B cell (primary cell): ENCODE measurements at regions of chr12 and their contacts with region 1.

Region 1: DNA sequence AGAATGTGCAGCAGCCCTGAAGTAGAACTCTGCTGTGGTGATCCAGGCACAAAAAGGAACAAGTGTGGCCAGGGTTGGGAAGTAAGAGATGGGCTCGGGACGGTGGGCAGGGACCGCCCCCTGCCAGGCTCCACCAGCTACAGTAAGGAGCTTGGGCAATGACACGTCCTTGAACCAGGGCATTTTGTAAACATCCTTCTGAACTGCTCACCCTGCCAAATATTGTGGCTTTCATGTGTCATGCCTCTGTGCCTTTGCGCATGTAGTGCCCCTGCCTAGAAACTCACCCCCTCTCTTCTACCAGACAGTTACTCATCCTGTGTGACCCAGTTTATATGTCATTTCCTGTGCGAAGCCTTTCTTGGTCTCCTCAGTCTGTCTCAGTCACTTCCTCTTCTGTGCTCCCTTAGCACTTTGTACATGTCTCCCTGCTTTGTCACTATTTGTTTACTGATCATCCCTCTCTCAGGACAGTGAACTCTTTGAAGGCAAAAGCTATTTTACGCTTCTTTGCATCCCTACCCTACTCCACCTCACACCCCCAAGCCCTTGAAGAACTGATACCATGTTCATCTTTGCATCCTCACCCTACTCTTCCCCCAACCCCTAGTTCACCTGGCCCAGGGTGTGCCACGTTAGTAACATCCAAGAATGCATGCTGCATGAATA is 108.9 kb upstream of the PLEKHG7 start:
- DNase-seq: peak; percentile 94
- ATAC-seq: peak; percentile 93
- H3K4me3 ChIP-seq: peak overlapping the region in 2 of 5 experiments; percentile 20 to 22
- H3K4me3 Mint-ChIP-seq: peak overlapping the region; percentile 69
- H3K27ac ChIP-seq: peak overlapping the region; percentile 86 to 97
- H3K27ac Mint-ChIP-seq: peak overlapping the region; percentile 94
- H3K4me1 ChIP-seq: peaks cover 21 to 25% of the 10 kb centered on the region in 2 donors
- H3K4me1 Mint-ChIP-seq: peaks cover 34% of the 10 kb centered on the region
- H3K27me3 ChIP-seq: no peaks in the 10 kb centered on the region
- H3K27me3 Mint-ChIP-seq: no peaks in the 10 kb centered on the region
- CTCF ChIP-seq: no peak

Region 2: DNA sequence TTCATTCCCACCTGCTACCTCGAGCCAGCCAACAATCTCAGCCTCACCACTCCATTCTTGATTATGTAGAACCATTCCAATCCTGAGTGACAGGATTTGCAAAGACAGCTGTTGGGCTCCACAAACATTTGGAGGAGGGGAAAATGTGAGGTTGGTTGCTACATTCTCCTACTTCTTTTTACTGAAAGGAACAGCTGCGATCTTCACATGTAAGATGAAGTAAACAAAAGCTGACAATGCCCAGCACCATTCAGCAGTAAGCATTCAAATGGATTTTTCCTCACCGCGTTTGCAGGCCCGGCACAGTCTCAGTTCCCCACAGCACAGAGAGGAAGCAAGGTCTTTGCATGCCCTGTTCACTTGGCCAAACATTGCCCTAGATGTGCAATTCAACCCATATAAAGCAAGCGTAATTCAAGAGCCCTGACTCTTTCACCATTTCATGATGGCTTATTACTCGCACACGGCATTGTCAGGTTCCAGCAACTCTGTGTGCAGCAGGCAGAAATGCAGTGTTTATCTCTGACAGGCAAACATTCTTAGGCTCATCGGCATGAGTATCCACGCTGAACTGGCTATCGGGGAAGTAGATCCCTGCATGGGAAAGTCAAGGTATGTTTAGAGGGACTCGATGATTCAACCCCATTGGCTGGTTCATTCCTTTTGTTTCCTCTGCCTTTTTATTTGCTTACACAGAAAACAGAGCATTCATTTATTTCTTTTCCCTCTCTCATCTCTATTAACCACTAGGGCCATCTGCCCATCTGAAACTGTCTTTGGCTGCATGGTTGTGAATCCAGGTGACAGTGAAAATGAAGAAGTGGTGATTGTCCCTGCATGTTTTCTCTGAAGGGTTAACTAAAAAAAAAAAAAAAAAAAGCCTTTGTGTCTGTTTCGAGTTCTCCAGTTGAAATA is 127.2 kb before region 1 on chr12:
- CTCF ChIA-PET with region 1: no interaction called
- POLR2A ChIA-PET with region 1: interaction called, 10 read pairs
- intact Hi-C with region 1: loop called (anchors 1 kb)
- DNase-seq: peak; percentile 87
- ATAC-seq: peak; percentile 76
- H3K4me3 ChIP-seq: peak overlapping the region; percentile 61 to 93 (median 68)
- H3K4me3 Mint-ChIP-seq: peak overlapping the region; percentile 94
- H3K27ac ChIP-seq: peak overlapping the region; percentile 85 to 93
- H3K27ac Mint-ChIP-seq: peak overlapping the region; percentile 95
- H3K4me1 ChIP-seq: peaks cover 80 to 83% of the 10 kb centered on the region in 2 donors
- H3K4me1 Mint-ChIP-seq: peaks cover 81% of the 10 kb centered on the region
- H3K27me3 ChIP-seq: no peaks in the 10 kb centered on the region
- H3K27me3 Mint-ChIP-seq: no peaks in the 10 kb centered on the region
- CTCF ChIP-seq: no peak

Region 3: GRCh38 chr12:92675085-92675865 is 81.4 kb after region 1 on chr12:
- CTCF ChIA-PET with region 1: no interaction called
- POLR2A ChIA-PET with region 1: no interaction called
- intact Hi-C with region 1: no loop called
- DNase-seq: no peak
- ATAC-seq: no peak
- H3K4me3 ChIP-seq: no peak overlapping the region
- H3K4me3 Mint-ChIP-seq: no peak overlapping the region
- H3K27ac ChIP-seq: no peak overlapping the region
- H3K27ac Mint-ChIP-seq: no peak overlapping the region
- H3K4me1 ChIP-seq: peaks cover 6 to 9% of the 10 kb centered on the region in 2 donors
- H3K4me1 Mint-ChIP-seq: peaks cover 23% of the 10 kb centered on the region
- H3K27me3 ChIP-seq: no peaks in the 10 kb centered on the region
- H3K27me3 Mint-ChIP-seq: no peaks in the 10 kb centered on the region
- CTCF ChIP-seq: no peak

Region 4: DNA sequence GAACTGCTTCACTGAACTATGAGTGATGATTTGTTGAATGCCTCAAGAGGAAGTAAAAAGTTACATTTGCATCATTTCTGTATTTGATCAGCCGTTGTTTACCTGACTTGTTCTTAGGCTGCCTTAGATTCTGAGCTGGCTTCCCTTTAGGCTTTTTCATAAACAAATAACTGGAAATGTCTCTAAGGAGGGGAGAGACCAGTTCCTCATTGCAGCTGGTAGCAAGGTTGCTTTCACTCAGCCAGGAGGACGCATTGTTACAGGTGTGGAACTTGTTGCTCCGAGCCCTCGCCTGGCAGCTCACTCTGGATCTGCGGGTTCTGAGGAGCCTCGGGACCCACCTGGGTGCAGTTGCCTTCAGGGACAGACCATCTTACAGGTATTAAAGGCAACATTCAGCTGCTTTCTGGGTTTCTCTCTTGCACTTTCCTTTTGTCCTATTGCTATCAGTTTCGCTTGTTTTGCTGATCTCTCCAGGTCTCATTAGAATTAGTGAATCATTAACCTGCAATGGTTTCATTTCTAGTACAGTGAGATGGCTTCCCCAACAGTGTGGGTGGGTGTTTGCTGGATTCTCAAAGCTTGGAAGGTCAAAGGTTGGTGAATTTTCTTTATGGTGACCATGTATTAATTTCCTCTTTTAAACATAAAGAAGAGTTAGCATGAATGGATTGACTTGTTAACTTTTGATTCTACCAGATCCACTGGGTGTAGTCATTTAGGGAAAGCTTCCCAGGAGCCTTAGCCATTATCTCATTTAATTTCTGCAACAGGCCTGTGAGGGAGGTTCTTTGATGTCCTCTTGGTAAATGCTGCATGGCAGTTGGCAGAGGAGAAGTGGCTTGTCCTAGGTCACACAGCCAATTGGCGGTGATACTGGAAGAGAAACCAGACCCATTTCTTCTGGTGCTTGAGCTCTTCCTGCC is 109.1 kb after region 1 on chr12 and contains the start of gene PLEKHG7:
- CTCF ChIA-PET with region 1: no interaction called
- POLR2A ChIA-PET with region 1: interaction called, 4 read pairs
- intact Hi-C with region 1: loop called (anchors 2 kb)
- DNase-seq: peak; percentile 72
- ATAC-seq: peak; percentile 76
- H3K4me3 ChIP-seq: peak within 1 kb of the TSS in 4 of 5 experiments; percentile 30 to 67 (median 54)
- H3K4me3 Mint-ChIP-seq: peak within 1 kb of the TSS; percentile 83
- H3K27ac ChIP-seq: peak within 1 kb of the TSS; percentile 65 to 73
- H3K27ac Mint-ChIP-seq: peak within 1 kb of the TSS; percentile 79
- H3K4me1 ChIP-seq: peaks cover 16 to 29% of the 10 kb centered on the region in 2 donors
- H3K4me1 Mint-ChIP-seq: peaks cover 41% of the 10 kb centered on the region
- H3K27me3 ChIP-seq: no peaks in the 10 kb centered on the region
- H3K27me3 Mint-ChIP-seq: no peaks in the 10 kb centered on the region
- CTCF ChIP-seq: no peak
- total RNA-seq, gene PLEKHG7: 23.2 and 26.7 TPM in 2 replicates